ENCODE measurements at regions of chr6 and their contacts with region 1.

Region 1: DNA sequence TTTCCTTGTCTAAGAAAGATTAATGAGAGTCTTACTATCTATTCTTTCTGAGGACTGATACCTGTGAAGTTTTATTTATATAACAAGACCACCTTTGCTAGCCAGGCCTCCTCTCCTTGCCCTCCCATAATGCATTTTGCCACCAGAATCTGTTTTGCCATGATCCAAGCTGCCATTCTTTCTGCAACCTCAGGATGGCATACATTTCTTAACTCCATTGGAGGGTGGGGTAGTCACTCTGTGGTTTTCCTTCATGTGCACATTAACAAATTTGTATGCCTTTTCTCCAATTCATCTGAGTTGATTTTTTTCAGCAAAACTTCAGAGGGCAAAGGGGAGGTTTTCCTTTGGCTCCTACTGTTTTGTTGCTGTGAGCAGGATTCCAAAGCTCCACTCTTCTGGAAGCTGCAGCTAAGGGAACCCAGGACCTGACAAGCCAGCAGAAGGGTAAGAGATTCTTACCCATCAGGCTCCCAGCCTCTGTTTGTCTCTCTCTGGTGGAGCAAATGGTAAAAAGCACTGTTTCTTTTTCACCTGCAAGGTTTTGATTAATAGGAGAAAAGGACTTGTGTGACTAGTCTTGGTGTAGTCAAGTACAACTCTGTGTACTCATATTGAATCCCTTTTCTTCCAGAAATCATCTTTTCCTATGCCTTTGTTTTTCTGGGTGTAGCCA is 26.2 kb upstream of the ENPP4 start:
- DNase-seq: no peak
- ATAC-seq: peak; percentile 56
- H3K4me3 ChIP-seq: peak overlapping the region in 1 of 4 donors; percentile 21
- H3K27ac ChIP-seq: peak overlapping the region; percentile 84 to 90 (median 86)
- H3K4me1 ChIP-seq: peaks cover 45 to 50% of the 10 kb centered on the region in 2 donors
- H3K27me3 ChIP-seq: no peaks in the 10 kb centered on the region
- CTCF ChIP-seq: peak in 4 of 5 experiments; percentile 26 to 45 (median 36)
- POLR2A ChIP-seq: no peak

Region 2: DNA sequence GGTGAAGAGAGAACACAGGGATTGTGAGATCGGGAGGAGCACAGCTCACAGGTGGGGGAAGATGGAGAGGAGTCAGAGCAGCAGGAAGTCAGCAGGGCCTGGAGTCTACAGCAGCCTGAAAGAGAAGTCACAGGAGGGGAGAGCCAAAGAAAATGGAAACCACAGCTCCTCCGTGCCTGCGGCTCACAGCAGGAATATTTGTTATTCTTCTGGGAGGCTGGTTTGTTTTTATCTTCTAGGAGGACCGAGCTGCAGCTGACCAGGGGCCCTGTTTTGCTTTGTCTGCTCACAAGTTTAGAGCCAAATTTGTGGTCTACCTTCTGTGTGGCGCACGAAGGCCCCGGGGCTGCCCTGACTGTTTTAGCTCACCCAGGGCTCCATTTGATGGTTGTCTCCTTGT is 169.7 kb before region 1 on chr6:
- in situ Hi-C with region 1: no loop called
- intact Hi-C with region 1: no loop called
- DNase-seq: no peak
- ATAC-seq: no peak
- H3K4me3 ChIP-seq: no peak overlapping the region
- H3K27ac ChIP-seq: peak overlapping the region in 3 of 4 donors; percentile 6 to 49 (median 10)
- H3K4me1 ChIP-seq: peaks cover 13% of the 10 kb centered on the region in 2 donors
- H3K27me3 ChIP-seq: no peaks in the 10 kb centered on the region
- CTCF ChIP-seq: no peak
- POLR2A ChIP-seq: no peak

Region 3: DNA sequence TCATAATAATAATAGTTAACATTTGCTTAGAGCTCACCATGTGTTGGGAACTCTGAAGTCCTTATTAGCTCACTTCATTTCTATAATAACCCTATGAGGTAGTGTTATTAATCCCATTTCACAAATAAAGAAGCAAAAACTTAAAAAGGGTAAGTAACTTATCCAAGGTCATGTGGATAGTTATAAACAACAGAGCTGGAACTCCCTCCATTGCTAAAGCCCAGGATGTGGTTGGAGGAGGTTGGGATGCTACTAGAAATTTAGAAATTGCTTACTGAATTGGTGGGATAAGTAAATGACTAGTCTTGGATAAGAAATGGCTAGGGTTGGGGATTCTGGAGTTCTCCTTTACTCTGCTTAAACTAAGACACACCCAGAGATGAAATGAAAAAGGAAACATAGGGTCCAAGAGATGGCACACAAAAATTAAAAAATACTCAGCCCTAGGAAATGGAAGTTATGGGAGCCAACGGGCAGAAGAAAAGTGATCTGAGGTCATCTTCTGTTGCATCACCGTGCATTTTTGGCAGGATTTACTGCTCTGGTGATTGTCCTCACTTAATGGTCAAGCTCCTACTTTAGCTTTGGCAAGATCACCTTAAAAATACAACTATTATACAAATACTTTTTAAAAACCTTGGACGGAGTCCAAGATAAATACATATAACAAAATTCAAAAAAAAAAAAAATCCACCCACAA is 80.2 kb before region 1 on chr6:
- in situ Hi-C with region 1: no loop called
- intact Hi-C with region 1: no loop called
- DNase-seq: peak; percentile 56 to 70
- ATAC-seq: peak; percentile 90 to 91
- H3K4me3 ChIP-seq: no peak overlapping the region
- H3K27ac ChIP-seq: peak overlapping the region in 3 of 4 donors; percentile 11 to 55 (median 47)
- H3K4me1 ChIP-seq: peaks cover 10 to 17% of the 10 kb centered on the region in 2 donors
- H3K27me3 ChIP-seq: no peaks in the 10 kb centered on the region
- CTCF ChIP-seq: no peak
- POLR2A ChIP-seq: no peak

Region 4: GRCh38 chr6:46170357-46171289 is 67.0 kb after region 1 on chr6 and contains the start of gene ENPP5:
- in situ Hi-C with region 1: no loop called
- intact Hi-C with region 1: loop called (anchors 5 kb)
- DNase-seq: peak; percentile 88 to 93
- ATAC-seq: peak; percentile 82 to 90
- H3K4me3 ChIP-seq: peak within 1 kb of the TSS; percentile 71 to 91 (median 81)
- H3K27ac ChIP-seq: peak within 1 kb of the TSS; percentile 74 to 92 (median 86)
- H3K4me1 ChIP-seq: peaks cover 43 to 47% of the 10 kb centered on the region in 2 donors
- H3K27me3 ChIP-seq: no peaks in the 10 kb centered on the region
- CTCF ChIP-seq: no peak
- POLR2A ChIP-seq: peak; percentile 75 to 83
- total RNA-seq, gene ENPP5: 9.9 to 28.3 (median 19.2) TPM

Measured in gastrocnemius medialis (tissue), 4 donors.